ENCODE measurements at regions of chr11 and their contacts with region 1.

Region 1: GRCh38 chr11:2099516-2100340 is 39.5 kb downstream of the IGF2 start:
- DNase-seq: peak; percentile 77

Region 2: DNA sequence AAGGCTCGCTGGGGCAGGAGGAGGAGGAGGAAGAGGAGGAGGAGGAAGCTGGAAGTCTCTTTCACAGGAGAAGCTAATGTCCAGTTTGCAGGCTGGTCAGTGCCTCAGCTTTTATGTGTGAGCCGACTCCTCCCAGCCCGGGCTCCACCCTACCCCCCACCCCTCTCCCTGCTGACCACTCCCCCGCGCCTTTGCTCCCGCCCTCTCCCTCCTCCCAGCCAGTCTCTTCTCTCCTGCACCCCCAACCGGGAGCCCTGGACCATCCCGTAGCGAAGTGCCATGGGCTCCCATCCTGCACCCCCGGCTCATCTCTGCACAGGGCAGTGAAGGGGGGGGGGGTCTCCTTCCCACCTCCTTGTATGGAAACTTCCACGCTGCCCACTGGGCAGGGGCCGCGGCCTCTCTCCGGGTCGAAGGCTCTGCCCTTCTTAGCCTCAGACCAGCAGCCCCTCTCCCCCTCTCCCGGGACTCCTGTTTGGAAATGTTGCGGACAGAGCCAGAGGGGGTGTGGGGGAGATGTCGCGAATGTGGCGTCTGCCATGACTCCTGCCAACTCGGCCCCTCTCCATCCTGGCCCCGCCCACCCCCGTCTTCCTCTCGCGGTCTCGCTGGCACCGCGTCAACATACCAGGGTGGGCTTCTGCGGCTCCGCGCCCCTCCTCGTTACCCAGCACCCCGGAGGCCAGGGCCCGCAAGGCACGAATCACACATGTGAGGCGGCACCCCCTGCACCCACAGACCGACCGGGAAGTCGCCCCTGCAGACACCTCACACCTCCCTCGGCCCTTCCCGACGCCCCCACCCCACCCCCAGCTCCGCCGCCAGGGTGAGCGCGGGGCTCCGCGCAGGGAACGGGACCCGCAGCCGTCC is 37.7 kb after region 1 on chr11:
- intact Hi-C with region 1: loop called (anchors 5 kb)
- DNase-seq: no peak

Region 3: DNA sequence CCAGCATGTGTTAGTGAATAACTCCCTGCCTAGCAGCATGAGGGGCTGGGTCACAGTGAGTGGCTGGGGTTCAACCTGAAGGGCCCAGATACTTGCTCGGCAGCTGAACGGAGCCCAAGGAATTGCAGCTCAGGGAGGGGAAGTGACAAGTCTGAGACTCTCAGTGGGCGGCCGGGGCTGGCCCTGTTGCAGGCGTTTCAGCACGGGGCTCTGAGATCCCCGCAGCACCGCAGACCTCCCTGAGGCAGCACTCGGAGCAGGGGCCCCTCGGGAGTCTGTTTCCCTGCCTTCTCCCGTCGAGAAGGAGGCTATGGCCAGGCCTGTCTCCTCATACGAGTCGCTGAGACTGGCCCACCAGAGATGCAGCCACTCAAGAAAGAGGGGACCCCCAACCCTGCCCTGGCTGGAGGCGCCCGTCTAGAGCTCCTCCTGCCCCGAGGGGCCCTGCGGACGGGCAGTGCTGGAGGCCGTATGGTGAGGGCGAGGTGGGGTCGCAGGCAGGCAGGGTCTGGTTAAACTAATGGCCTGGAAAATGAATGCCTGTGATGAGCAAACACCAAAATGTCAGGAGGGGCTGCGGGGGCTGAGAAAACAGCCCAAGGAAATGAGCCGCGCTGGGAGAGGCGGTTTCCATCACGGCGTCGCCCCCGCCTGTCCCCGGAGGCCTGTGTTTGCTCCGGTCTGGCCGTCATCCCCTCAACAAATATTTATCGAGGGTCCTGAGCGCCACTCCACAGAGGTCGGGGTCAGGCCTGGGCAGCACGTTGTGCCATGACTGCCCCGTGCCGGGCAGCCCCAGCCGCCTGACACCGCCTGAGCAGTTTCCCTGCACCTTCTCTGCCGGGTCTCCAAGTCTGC is 310.1 kb after region 1 on chr11:
- intact Hi-C with region 1: no loop called
- DNase-seq: no peak

Measured in cardiac septum (tissue), 1 donor.